IMR-90 (cell line): ENCODE measurements at regions of chrX and their contacts with region 1.

Region 1: DNA sequence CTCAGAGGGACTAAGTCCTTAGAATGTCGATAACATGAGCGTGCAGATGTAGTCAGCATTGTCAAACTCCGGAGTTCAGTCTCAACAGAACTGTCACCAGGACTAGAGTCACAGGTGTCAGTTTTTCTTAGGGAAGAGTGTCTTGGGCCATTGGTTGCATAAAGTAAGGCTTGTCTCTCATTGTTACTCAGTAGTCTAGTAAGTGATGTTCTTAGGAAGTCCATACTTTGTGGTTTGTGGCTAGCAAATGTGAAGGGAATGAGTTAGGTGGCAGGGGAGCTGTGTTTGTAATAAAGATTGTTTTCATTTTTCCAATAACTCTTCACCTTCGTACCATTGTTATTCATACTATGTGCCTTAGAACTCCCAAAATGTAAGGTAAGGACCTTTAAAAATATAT is 119.6 kb downstream of the AFF2 start:
- DNase-seq: no peak
- ATAC-seq: no peak
- H3K4me3 ChIP-seq: no peak overlapping the region
- H3K27ac ChIP-seq: no peak overlapping the region
- H3K4me1 ChIP-seq: no peaks in the 10 kb centered on the region
- H3K27me3 ChIP-seq: no peaks in the 10 kb centered on the region
- CTCF ChIP-seq: no peak
- POLR2A ChIP-seq: no peak
- RAD21 ChIP-seq: no peak

Region 2: GRCh38 chrX:148567229-148567628 is 52.8 kb before region 1 on chrX:
- CTCF ChIA-PET with region 1: interaction called, 10 read pairs
- POLR2A ChIA-PET with region 1: no interaction called
- dilution Hi-C with region 1: no loop called
- in situ Hi-C with region 1: no loop called
- intact Hi-C with region 1: no loop called
- DNase-seq: peak; percentile 25
- ATAC-seq: no peak; the same call in 1 of the 2 replicates
- H3K4me3 ChIP-seq: no peak overlapping the region
- H3K27ac ChIP-seq: no peak overlapping the region
- H3K4me1 ChIP-seq: no peaks in the 10 kb centered on the region
- H3K27me3 ChIP-seq: no peaks in the 10 kb centered on the region
- CTCF ChIP-seq: no peak
- POLR2A ChIP-seq: no peak
- RAD21 ChIP-seq: no peak